Activated CD4-positive, alpha-beta T cell treated with anti-CD3 and anti-CD28 coated beads for 36 hours (primary cell): ENCODE measurements at regions of chr3 and their contacts with region 1.

Region 1: DNA sequence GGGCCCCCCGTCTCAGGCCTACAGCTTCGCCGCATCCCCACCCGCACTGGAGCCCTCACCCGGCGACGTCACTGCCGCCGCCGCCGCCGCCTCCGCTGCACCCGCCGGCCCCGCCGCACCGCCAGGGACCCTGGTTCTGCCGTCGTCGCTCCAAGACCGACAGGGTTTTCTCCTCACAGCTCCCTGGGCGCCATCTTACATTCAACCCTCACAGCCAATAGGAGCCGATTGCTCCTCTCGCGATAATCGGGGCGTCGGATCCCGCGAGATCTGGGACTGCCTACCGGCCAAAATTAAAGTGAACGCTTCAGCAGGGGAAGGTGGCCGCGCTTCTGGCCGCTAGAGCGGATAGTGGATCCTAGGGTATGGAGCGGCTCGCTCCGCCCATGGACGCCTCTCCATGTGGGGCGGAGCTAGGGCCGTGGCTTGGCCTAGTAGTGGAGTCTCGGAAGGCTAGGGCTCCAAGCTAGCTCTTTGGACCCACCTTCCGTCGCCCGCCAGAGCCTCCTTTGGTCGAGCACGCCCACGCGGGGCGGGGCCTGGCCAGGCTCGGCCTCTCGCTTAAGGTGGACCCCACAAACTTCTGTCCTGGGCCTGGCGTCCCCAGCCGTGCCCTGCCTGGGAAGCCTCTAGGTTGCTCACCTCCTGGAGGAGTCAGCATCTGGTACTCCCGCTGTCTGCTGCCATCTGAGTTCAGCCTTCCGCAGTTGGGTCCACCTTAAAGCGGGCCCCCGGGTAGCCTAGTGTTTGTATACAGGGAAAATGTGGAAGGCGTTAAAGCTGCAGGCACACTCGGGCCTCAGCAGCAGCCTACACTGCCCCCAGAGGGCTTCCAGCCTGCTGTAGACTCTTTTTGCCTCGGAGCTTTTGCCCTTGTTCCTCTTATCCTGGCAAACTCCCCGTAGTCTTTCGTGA is at the start of gene QRICH1:
- DNase-seq: peak; percentile 98
- ATAC-seq: peak; percentile 86
- H3K4me3 Mint-ChIP-seq: peak within 1 kb of the TSS; percentile 90
- H3K27ac Mint-ChIP-seq: peak within 1 kb of the TSS; percentile 94
- H3K4me1 Mint-ChIP-seq: peaks cover 33% of the 10 kb centered on the region
- H3K27me3 Mint-ChIP-seq: no peaks in the 10 kb centered on the region
- total RNA-seq, gene QRICH1: 119 to 171 TPM

Region 2: DNA sequence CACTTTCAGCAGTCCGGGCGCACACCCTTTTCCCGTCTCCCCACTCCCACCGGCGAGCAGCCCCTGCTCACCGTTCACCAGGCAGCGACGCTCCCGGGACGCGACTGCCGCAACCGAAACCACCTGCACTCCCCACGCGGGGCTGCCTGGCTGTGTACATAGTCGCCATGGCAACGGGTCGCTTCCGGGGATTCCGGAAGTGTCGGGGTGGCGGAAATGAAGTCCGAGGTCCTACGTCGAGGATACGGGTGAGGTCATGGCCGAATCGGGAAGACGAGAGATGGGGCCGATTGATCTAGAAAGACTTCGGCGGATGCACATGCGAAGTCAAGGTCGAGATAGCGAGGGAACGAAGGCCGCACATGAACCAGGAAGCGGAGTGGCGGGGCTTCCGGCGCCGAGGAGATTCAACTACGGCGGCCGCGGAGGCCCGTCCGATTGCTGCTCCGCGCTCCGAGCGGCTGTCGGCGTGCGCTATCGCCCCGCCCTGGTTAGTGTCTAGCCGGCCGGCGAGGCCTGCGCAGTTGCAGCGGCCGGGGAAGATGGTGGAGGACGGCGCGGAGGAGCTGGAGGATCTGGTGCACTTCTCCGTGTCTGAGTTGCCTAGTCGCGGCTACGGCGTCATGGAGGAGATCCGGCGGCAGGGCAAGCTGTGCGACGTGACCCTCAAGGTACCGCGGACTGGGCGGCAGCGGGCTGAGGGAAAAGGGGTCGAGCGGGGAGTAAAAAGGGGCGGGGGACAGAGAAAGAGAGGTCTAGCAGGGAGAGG is 1811.5 kb before region 1 on chr3 and contains the starts of genes KIF9 and KLHL18:
- CTCF ChIA-PET with region 1: no interaction called
- POLR2A ChIA-PET with region 1: no interaction called
- intact Hi-C with region 1: loop called in 1 of 2 experiments (anchors 5 kb)
- DNase-seq: peak; percentile 97
- ATAC-seq: peak; percentile 91
- H3K4me3 Mint-ChIP-seq: peak within 1 kb of the TSS; percentile 95
- H3K27ac Mint-ChIP-seq: peak within 1 kb of the TSS; percentile 99
- H3K4me1 Mint-ChIP-seq: peaks cover 31% of the 10 kb centered on the region
- H3K27me3 Mint-ChIP-seq: no peaks in the 10 kb centered on the region
- total RNA-seq, gene KIF9: 2.7 to 5.3 TPM
- total RNA-seq, gene KLHL18: 19.0 to 22.4 TPM

Region 3: DNA sequence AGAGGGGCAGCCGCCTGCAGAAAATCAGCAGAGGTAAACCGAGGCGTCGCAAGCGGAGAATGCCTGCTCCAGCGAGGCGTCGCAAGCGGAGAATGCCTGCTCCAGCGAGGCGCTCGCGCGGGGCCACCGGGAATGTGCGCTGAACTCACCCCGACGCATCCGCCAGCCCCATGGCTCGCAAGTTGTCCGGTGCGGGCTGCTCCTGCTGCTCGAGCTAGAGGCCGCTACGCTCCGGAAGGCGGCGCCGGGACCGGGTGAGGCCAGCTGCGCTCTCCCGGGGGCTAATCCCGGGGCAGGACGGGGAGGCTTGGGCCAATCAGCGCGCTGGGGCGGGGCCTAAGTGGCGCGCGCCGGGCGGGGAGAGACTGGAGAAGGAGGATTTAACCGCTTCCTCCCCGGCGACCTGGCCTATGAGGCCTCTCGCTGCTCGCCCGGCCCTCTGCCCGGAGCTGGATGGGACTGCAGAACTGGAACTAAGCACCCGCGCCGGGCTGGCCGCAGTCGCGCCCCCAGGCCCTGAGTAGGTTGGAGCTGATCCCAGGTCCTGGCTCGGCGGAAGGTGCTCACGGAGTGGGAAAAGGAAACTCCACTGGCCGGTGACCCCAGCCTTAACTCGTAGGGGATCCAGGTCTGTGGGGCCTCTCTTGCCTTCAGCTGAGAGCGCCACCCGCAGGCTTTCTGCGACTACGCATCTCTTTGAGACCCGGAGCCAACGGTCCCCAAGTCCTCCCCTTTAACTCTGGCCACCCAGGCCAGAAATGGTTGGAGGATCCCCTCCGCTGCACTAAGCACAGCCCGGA is 458.7 kb before region 1 on chr3 and contains the start of gene SLC26A6:
- CTCF ChIA-PET with region 1: no interaction called
- POLR2A ChIA-PET with region 1: interaction called, 3 read pairs
- intact Hi-C with region 1: loop called in 1 of 2 experiments (anchors 1 kb)
- DNase-seq: peak; percentile 97
- ATAC-seq: peak; percentile 97
- H3K4me3 Mint-ChIP-seq: peak within 1 kb of the TSS; percentile 84
- H3K27ac Mint-ChIP-seq: peak within 1 kb of the TSS; percentile 76
- H3K4me1 Mint-ChIP-seq: peaks cover 13% of the 10 kb centered on the region
- H3K27me3 Mint-ChIP-seq: no peaks in the 10 kb centered on the region
- total RNA-seq, gene SLC26A6: 35.0 to 38.5 TPM

Region 4: GRCh38 chr3:48989796-48990635 is 104.1 kb before region 1 on chr3 and contains the start of gene P4HTM:
- CTCF ChIA-PET with region 1: interaction called, 26 read pairs
- POLR2A ChIA-PET with region 1: interaction called, 5 read pairs
- intact Hi-C with region 1: loop called (anchors 1 to 2 kb)
- DNase-seq: peak; percentile 90
- ATAC-seq: peak; percentile 76
- H3K4me3 Mint-ChIP-seq: peak within 1 kb of the TSS; percentile 95
- H3K27ac Mint-ChIP-seq: peak within 1 kb of the TSS; percentile 93
- H3K4me1 Mint-ChIP-seq: peaks cover 35% of the 10 kb centered on the region
- H3K27me3 Mint-ChIP-seq: no peaks in the 10 kb centered on the region
- total RNA-seq, gene P4HTM: 25.7 to 30.4 TPM

Region 5: DNA sequence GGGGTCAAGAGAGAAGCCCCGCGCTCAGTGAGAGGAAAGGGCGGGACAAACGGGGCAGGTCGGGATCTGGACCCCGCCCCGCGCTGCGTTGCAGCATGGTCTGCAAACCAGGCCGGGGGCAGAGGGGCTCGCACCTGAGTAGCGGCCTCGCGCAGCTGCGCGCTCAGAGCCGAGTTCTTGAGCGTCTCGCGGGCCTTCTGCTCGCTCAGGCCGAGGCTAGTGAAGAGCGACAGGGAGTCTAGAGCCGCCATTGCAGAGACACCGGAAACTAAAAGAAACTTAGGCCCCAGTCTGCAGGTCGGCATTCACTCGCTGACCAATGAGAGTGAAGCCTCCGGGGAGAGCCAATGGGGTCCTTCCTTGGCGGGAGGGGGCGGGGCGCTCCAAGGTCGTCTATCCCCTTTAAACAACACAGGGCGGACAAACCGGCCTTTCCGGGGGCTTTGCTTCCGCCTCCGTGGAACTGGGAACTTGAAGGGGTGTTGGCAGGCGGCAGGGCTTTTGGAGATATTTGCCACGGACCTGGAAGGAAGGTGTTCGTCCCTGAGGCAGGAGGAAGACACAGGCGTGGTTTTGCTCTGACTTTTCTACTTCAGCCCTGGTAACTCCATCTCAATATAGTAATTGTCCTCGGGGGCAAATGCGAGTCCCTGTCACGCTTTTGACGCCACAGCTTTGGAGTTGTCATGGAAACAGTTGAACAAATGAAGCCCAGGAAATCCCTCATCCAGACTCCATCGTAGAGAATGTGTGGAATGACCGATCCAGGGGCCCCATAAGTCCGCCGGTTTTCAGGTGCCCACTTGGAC is 10.6 kb after region 1 on chr3 and contains the start of gene QARS1:
- CTCF ChIA-PET with region 1: interaction called, 13 read pairs
- POLR2A ChIA-PET with region 1: interaction called, 12 read pairs
- intact Hi-C with region 1: loop called (anchors 1 kb)
- DNase-seq: peak; percentile 94
- ATAC-seq: peak; percentile 100
- H3K4me3 Mint-ChIP-seq: peak within 1 kb of the TSS; percentile 96
- H3K27ac Mint-ChIP-seq: peak within 1 kb of the TSS; percentile 96
- H3K4me1 Mint-ChIP-seq: peaks cover 21% of the 10 kb centered on the region
- H3K27me3 Mint-ChIP-seq: no peaks in the 10 kb centered on the region
- total RNA-seq, gene QARS1: 240 to 342 TPM

Region 6: DNA sequence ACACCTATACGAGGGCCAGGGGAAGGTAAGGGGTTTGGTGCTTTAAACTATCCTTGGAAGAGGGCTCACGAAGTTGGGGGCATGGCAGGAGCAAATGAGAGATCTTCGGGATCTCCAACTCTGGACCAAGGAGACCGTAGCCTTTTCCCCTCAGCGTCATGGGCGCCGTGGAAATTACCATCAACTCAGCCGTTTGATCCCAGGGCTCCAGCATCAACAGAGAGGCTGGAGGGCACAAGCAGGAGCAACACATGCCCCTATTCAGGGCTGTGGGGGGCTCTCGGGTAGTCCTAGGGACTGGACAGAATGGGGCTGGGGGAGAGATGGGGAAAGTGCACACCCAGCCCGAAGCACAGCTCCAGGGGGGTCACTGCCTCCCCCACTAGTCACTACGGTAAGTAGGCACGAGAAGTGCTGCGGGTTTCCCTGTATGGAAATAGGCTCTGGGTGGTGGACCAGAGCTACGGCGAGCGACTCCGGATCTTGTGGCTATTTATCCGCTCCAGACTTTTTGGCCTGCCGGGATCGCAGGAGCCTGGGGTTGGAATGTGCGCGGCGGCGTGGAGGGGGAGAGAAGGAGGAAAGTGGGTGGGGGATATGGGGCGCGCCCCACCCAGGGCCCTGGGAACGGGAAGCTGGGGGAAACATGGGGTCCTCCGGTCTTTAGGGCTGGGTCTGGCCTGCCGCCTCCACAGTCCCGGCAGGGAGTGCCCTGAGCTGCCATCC is 39.3 kb after region 1 on chr3:
- CTCF ChIA-PET with region 1: no interaction called
- POLR2A ChIA-PET with region 1: no interaction called
- intact Hi-C with region 1: no loop called
- DNase-seq: no peak
- ATAC-seq: no peak
- H3K4me3 Mint-ChIP-seq: no peak overlapping the region
- H3K27ac Mint-ChIP-seq: no peak overlapping the region
- H3K4me1 Mint-ChIP-seq: peaks cover 6% of the 10 kb centered on the region
- H3K27me3 Mint-ChIP-seq: peaks cover 17% of the 10 kb centered on the region

Region 7: GRCh38 chr3:49339945-49340800 is 246.1 kb after region 1 on chr3 and contains the start of gene USP4:
- CTCF ChIA-PET with region 1: interaction called, 11 read pairs
- POLR2A ChIA-PET with region 1: no interaction called
- intact Hi-C with region 1: loop called in 1 of 2 experiments (anchors 1 kb)
- DNase-seq: peak; percentile 97
- ATAC-seq: peak; percentile 89
- H3K4me3 Mint-ChIP-seq: peak within 1 kb of the TSS; percentile 99
- H3K27ac Mint-ChIP-seq: peak within 1 kb of the TSS; percentile 96
- H3K4me1 Mint-ChIP-seq: peaks cover 49% of the 10 kb centered on the region
- H3K27me3 Mint-ChIP-seq: no peaks in the 10 kb centered on the region
- total RNA-seq, gene USP4: 69.3 to 71.8 TPM